Stomach (tissue), 19 donors: ENCODE measurements at regions of chr17 and their contacts with region 1.

Region 1: DNA sequence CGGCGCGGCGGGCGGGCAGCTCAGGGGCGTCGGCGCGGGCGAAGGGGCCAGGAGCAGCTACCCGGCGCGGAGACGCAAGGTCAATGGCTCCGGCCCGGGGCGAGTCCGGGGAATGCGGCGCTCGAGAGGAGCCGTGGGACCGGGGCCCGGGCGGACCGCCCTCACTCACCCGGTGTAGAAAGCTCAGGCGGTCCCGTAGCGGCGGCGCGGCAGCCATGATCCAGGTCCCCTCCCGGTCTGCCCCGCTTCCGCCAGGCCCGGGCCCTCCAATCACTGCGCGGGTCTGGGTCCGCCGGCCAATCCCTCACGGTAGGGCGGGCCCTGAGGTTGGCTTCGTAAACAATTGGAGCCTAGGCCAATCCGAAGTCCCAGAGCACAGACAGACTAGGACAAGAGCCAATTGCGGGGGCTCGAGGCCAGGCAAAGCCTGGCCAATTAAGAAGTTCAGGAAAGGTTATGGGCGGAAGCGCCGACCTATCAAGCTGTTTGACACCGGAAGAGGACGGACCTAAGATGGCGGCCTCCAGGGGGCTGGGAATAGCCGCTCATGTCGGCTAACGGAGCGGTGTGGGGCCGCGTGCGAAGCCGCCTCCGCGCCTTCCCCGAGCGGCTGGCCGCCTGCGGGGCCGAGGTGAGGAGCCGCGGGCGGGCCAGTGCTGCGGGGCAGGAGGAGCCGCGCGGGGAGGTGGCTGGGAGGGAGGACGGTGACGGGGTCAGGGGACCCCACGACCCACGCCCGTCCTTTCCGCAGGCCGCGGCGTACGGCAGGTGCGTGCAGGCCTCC is at the starts of genes NDUFAF8 and TEPSIN:
- DNase-seq: peak; percentile 99 to 100
- H3K4me3 ChIP-seq: peak within 1 kb of the TSS; percentile 96 to 100 (median 100)
- H3K27ac ChIP-seq: peak within 1 kb of the TSS; percentile 63 to 90 (median 90)
- H3K4me1 ChIP-seq: peaks cover 27 to 58% (median 48%) of the 10 kb centered on the region in 4 donors
- H3K27me3 ChIP-seq: no peaks in the 10 kb centered on the region
- CTCF ChIP-seq: no peak
- EP300 ChIP-seq: no peak
- POLR2A ChIP-seq: no peak
- total RNA-seq, gene NDUFAF8: 14.5 to 185 (median 92.5) TPM in 4 of 5 donors, not detected in the other
- total RNA-seq, gene TEPSIN: 9.4 to 295 (median 22.3) TPM

Region 2: GRCh38 chr17:80619535-80620312 is 619.3 kb before region 1 on chr17:
- intact Hi-C with region 1: no loop called
- DNase-seq: no peak
- H3K4me3 ChIP-seq: no peak overlapping the region
- H3K27ac ChIP-seq: no peak overlapping the region
- H3K4me1 ChIP-seq: peaks cover 0 to 8% (median 4%) of the 10 kb centered on the region in 4 donors
- H3K27me3 ChIP-seq: no peaks in the 10 kb centered on the region
- CTCF ChIP-seq: no peak
- EP300 ChIP-seq: no peak
- POLR2A ChIP-seq: no peak

Region 3: DNA sequence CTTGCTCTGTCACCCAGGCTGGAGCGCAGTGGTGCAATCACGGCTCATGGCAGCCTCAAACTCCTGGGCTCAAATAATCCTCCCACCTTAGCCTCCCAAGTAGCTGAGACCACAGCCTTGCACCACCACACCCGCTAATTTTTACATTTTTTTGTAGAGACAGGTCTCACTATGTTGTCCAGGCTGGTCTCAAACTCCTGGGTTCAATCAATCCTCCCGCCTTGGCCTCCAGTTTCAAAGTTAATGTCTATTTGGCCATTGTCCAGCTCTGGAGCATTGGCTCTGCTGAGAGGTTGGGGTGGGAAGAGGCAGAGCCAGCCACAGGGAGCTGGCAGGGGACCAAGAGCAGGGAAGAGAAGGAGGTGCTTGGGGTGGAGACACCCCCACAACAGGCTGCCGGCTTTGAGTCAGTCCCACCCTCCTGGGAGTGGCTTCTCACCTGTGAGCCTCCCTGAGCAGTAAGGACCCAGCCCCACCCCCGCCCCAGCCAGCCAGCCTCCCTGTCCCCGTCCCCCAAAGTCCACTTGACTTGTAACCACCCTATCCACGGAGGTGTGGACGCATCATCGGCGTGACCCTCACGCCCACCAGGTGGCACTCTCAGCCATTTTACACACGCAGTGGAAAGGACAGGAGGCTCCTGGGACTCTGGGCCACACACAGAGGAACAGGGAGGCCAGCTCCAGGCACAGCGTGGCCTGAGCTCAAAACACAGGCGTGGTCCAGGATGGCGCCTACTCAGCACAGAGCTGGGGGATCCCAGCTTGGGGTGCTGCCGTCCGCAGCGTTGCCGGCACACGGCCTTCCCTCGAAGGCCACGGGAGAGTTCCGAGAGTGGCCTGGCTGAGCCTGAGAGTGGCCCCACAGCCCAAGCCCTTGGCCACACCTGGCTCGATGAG is 96.5 kb before region 1 on chr17:
- intact Hi-C with region 1: loop called (anchors 10 kb)
- DNase-seq: peak; percentile 87 to 94
- H3K4me3 ChIP-seq: no peak overlapping the region
- H3K27ac ChIP-seq: peak overlapping the region in 2 of 5 donors; percentile 15 to 58
- H3K4me1 ChIP-seq: peaks cover 11 to 18% (median 11%) of the 10 kb centered on the region in 4 donors
- H3K27me3 ChIP-seq: no peaks in the 10 kb centered on the region
- CTCF ChIP-seq: peak in 5 of 7 experiments; percentile 44 to 75 (median 60)
- EP300 ChIP-seq: no peak
- POLR2A ChIP-seq: no peak